Pancreas (tissue), 10 donors: ENCODE measurements at regions of chr1 and their contacts with region 1.

Region 1: DNA sequence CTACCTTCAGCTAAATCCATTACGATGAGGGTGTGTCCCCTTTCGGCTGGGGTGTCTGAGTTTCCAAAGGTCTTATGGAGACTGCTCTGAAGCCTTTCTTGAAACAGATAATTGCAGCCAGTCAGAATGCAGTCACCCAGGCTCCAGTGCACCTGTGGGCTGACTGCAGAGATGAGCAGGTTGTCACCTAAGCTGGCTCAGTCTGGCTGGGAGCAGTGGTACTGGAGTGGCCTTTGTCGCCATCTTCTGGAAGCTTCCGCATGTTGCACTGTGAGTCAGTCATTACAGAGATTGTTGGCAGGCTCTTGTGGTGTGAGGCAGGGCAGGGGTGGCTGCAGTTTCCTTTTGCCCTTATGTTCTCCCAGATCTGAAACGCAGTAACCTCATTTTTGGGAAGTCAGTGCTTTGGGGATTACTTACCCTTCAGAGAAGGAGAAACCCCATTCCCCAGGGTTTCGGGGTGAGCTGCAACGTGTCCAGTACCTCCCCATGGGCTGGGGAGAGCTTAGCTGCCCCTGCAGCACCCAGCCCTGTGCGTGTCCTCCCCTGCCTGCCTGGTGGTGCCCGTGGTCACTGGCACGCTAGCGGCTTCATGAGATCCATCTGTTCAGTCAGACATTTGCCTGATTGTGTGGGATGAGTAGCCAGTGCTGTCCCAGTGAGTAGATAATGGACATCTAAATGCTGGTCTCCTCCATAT is 48.0 kb downstream of the SMYD2 start:
- DNase-seq: peak; percentile 64 to 88 (median 80)
- ATAC-seq: peak; percentile 91 to 97 (median 97)
- H3K4me3 ChIP-seq: no peak overlapping the region
- H3K27ac ChIP-seq: no peak overlapping the region
- H3K4me1 ChIP-seq: no peaks in the 10 kb centered on the region
- H3K27me3 ChIP-seq: no peaks in the 10 kb centered on the region
- CTCF ChIP-seq: peak; percentile 70 to 83 (median 75)

Region 2: DNA sequence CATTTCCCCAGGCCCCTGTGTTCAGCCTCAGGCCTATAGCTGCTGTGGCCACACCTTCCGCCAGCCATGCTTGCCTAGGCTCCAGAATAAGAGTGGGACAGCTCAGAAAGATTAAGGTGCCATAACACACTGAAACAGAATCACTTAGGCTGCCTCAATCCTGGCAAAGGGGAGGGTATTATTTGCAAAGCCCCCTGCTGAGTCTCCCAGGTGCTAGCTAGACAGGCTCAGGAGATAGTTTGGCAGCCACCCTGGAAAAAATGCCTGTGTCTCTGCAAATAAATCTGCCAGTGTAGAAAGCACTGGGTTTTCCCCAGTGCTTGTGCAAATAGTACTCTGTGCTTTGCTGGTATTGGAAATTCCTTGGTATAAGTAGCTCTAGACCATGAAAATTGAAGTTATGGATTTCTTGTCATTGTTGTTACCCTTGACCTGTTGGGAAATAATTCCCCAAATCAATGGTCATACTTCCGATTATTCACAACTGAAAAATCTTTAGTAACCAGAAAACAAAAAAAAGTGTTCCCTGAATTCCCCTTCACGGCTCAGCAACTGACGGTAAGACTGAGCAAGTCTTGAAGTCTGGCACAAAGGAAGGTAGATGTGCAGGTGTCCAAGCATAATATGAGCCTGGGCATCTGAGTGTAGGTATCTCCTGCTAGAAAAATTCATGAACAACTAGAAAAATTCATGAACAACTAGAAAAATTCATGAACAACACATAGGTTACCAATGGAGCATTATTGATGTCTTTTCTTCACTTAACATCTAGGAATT is 284.3 kb before region 1 on chr1:
- intact Hi-C with region 1: no loop called
- DNase-seq: peak in 4 of 6 donors; percentile 35 to 81 (median 56)
- ATAC-seq: peak; percentile 63 to 95 (median 90)
- H3K4me3 ChIP-seq: no peak overlapping the region
- H3K27ac ChIP-seq: peak overlapping the region; percentile 8 to 74 (median 36)
- H3K4me1 ChIP-seq: peaks cover 0 to 6% (median 0%) of the 10 kb centered on the region in 3 donors
- H3K27me3 ChIP-seq: no peaks in the 10 kb centered on the region
- CTCF ChIP-seq: no peak

Region 3: GRCh38 chr1:214187121-214187900 is 141.6 kb before region 1 on chr1:
- intact Hi-C with region 1: no loop called
- DNase-seq: peak in 2 of 6 donors; percentile 40 to 63
- ATAC-seq: peak in 3 of 4 donors; percentile 32 to 45 (median 45)
- H3K4me3 ChIP-seq: peak overlapping the region in 3 of 4 donors; percentile 1 to 37 (median 18)
- H3K27ac ChIP-seq: no peak overlapping the region
- H3K4me1 ChIP-seq: no peaks in the 10 kb centered on the region
- H3K27me3 ChIP-seq: peaks cover 0 to 23% (median 0%) of the 10 kb centered on the region in 4 donors
- CTCF ChIP-seq: no peak

Region 4: GRCh38 chr1:214213136-214213535 is 115.8 kb before region 1 on chr1:
- intact Hi-C with region 1: loop called in 2 of 3 experiments (anchors 5 to 10 kb)
- DNase-seq: no peak
- ATAC-seq: no peak
- H3K4me3 ChIP-seq: no peak overlapping the region
- H3K27ac ChIP-seq: no peak overlapping the region
- H3K4me1 ChIP-seq: peaks cover 13 to 29% (median 18%) of the 10 kb centered on the region in 3 donors
- H3K27me3 ChIP-seq: no peaks in the 10 kb centered on the region
- CTCF ChIP-seq: no peak

Region 5: GRCh38 chr1:214261206-214262123 is 67.5 kb before region 1 on chr1:
- intact Hi-C with region 1: loop called in 1 of 3 experiments (anchors 5 kb)
- DNase-seq: peak; percentile 64 to 93 (median 85)
- ATAC-seq: peak; percentile 97 to 100 (median 100)
- H3K4me3 ChIP-seq: no peak overlapping the region
- H3K27ac ChIP-seq: no peak overlapping the region
- H3K4me1 ChIP-seq: no peaks in the 10 kb centered on the region
- H3K27me3 ChIP-seq: peaks cover 0 to 4% (median 0%) of the 10 kb centered on the region in 4 donors
- CTCF ChIP-seq: peak; percentile 87 to 98 (median 92)

Region 6: GRCh38 chr1:214271174-214271858 is 57.6 kb before region 1 on chr1:
- intact Hi-C with region 1: loop called in 1 of 3 experiments (anchors 10 kb)
- DNase-seq: no peak
- ATAC-seq: no peak
- H3K4me3 ChIP-seq: no peak overlapping the region
- H3K27ac ChIP-seq: no peak overlapping the region
- H3K4me1 ChIP-seq: no peaks in the 10 kb centered on the region
- H3K27me3 ChIP-seq: peaks cover 0 to 12% (median 0%) of the 10 kb centered on the region in 4 donors
- CTCF ChIP-seq: no peak

Region 7: GRCh38 chr1:214584805-214585766 is 256.2 kb after region 1 on chr1:
- intact Hi-C with region 1: loop called in 1 of 3 experiments (anchors 5 kb)
- DNase-seq: no peak
- ATAC-seq: peak; percentile 79 to 93 (median 87)
- H3K4me3 ChIP-seq: no peak overlapping the region
- H3K27ac ChIP-seq: no peak overlapping the region
- H3K4me1 ChIP-seq: peaks cover 0 to 6% (median 0%) of the 10 kb centered on the region in 3 donors
- H3K27me3 ChIP-seq: no peaks in the 10 kb centered on the region
- CTCF ChIP-seq: peak in 3 of 4 donors; percentile 56 to 61 (median 58)